ENCODE measurements at regions of chr1 and their contacts with region 1.

Region 1: DNA sequence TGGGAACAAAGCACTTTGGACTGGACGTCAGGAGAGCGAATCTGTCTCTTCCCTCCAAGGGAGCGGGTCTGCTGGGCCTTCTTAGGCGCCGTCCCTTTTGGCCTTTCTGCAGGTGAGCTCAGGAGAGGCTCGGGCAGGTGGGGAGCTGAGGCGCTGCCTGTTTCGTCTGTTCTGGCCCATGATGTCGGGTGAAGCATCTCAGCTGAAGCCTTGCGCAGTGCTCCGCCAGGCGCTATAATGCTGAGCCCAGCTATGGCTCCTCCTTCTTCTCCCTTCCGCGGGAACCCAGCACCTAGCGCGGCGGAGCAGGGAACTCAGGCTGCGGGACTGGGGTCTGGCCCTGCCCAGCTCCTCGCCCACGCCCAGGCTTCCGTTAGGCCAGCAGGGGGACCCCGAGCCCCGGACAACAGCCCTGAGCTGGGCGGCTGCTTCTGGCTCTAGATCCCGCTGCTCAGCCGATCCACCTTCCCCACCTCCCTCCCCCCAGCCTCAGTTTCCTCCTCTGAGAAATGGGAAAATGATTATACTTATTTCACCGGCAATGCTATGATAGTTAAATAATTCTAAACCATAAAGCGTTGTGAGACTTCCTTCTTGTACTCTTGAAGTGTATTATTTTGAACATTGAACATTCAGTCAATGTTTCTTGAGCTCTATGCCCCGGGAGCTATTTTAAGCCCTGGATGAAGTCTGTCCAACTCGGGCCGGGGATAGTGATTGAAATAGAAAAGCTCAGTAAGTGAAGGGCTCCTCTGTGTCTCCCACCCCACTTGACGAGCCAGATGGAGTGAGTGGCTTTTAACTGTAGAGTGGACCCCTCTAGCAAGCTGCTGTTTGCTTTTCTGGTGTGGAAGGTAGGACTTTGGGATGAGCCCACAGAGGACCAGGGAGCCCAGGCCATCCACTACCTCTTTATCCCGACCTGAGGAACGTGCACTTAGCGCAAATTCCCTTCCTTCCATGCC is 9.6 kb upstream of the ADORA1 start:
- DNase-seq: peak; percentile 81 to 92 (median 90)
- ATAC-seq: peak; percentile 91
- H3K4me3 ChIP-seq: no peak overlapping the region
- H3K27ac ChIP-seq: no peak overlapping the region
- H3K4me1 ChIP-seq: peaks cover 3% of the 10 kb centered on the region
- H3K27me3 ChIP-seq: no peaks in the 10 kb centered on the region

Region 2: GRCh38 chr1:203216274-203217138 is 98.6 kb after region 1 on chr1:
- intact Hi-C with region 1: loop called (anchors 2 to 5 kb)
- DNase-seq: peak in 2 of 3 donors; percentile 25 to 64
- ATAC-seq: peak; percentile 58 to 76
- H3K4me3 ChIP-seq: no peak overlapping the region
- H3K27ac ChIP-seq: no peak overlapping the region
- H3K4me1 ChIP-seq: no peaks in the 10 kb centered on the region
- H3K27me3 ChIP-seq: no peaks in the 10 kb centered on the region